Activated CD8-positive, alpha-beta T cell treated with anti-CD3 and anti-CD28 coated beads for 36 hours (primary cell): ENCODE measurements at regions of chr20 and their contacts with region 1.

Region 1: DNA sequence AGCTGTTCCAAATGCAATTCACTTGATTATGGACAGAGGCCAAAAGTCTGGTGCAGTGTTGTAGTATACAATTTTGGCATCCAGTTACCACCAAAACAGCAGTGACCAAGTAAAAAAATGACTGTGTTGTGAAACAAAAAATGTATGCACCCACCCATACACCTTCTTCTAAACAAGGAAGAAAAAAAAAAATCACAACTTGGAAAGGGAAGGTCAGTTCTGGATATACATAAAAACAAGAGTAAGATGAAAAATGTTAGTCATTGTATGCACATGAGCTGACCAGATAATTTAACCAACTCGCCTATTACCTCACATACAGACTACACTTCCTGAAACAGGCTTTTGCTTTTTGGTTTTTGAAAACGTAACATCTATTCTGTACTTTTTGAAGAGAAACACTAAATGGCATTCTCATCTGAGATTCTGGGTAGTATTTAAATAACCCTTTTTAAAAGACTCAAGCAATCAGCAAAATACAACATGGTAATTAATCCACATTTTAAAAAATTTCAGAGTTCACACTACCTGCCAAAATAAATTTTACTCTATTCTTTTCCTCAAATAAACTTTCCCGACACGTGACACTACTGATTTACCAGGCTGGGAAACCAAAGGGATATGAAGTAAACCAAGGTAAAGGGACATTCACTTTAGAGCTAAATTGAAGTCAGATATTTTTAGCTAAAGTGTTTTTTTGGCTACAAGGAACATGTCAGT is 141.6 kb upstream of the SHLD1 start:
- DNase-seq: no peak
- ATAC-seq: no peak
- H3K4me3 Mint-ChIP-seq: peak overlapping the region; percentile 96
- H3K27ac Mint-ChIP-seq: peak overlapping the region; percentile 99
- H3K4me1 Mint-ChIP-seq: peaks cover 51% of the 10 kb centered on the region
- H3K27me3 Mint-ChIP-seq: no peaks in the 10 kb centered on the region
- CTCF ChIP-seq: no peak

Region 2: DNA sequence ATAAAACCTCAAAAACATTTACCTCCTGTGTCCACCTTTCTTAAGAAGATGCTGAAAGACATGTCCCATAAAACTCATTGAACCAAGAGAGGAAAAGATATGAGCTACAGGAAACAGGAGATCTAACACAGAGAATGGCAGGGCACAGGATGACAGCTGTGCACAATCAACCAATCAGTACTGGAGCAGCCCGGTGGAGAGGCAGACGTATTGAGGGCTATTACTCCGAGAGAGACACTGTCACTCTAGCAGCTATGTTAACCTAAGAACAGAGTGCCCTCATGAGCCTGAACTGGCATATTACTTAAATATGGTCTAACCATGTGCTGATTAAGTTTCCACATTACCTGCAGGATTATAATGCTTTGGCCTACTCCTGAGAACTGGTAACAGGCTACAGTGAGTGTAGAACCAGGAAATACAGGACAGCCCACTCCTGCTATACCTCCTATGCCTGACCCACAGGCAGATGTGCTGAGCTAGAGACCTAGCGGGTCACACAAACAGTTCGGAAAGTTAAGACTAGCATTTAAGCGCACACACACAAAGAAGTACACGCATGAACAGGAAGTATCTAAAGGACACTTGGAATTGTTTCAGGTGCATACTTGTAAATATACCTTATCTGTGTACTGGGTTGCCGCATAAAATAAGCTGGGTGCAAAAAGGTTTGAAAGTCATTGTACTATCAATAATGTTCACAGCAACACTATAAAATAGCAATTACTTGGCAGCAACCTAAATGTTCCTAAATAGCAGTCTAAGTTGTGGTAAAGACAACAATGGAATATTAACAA is 57.7 kb before region 1 on chr20:
- CTCF ChIA-PET with region 1: no interaction called
- POLR2A ChIA-PET with region 1: no interaction called
- intact Hi-C with region 1: no loop called
- DNase-seq: no peak
- ATAC-seq: no peak
- H3K4me3 Mint-ChIP-seq: no peak overlapping the region
- H3K27ac Mint-ChIP-seq: peak overlapping the region; percentile 21
- H3K4me1 Mint-ChIP-seq: peaks cover 17% of the 10 kb centered on the region
- H3K27me3 Mint-ChIP-seq: no peaks in the 10 kb centered on the region
- CTCF ChIP-seq: no peak

Region 3: GRCh38 chr20:5596401-5597193 is 12.0 kb before region 1 on chr20:
- CTCF ChIA-PET with region 1: no interaction called
- POLR2A ChIA-PET with region 1: interaction called, 36 read pairs
- intact Hi-C with region 1: no loop called
- DNase-seq: no peak
- ATAC-seq: no peak
- H3K4me3 Mint-ChIP-seq: no peak overlapping the region
- H3K27ac Mint-ChIP-seq: peak overlapping the region; percentile 85
- H3K4me1 Mint-ChIP-seq: peaks cover 58% of the 10 kb centered on the region
- H3K27me3 Mint-ChIP-seq: no peaks in the 10 kb centered on the region
- CTCF ChIP-seq: no peak